Activated B cell treated with CpG ODN at 0.5 μM for 24 hours (primary cell): ENCODE measurements at regions of chr15 and their contacts with region 1.

Region 1: GRCh38 chr15:44397869-44398268 is 29.6 kb upstream of the CTDSPL2 start:
- DNase-seq: no peak
- ATAC-seq: no peak
- H3K4me3 Mint-ChIP-seq: no peak overlapping the region
- H3K27ac Mint-ChIP-seq: no peak overlapping the region
- H3K4me1 Mint-ChIP-seq: peaks cover 2% of the 10 kb centered on the region
- H3K27me3 Mint-ChIP-seq: no peaks in the 10 kb centered on the region
- CTCF ChIP-seq: no peak

Region 2: DNA sequence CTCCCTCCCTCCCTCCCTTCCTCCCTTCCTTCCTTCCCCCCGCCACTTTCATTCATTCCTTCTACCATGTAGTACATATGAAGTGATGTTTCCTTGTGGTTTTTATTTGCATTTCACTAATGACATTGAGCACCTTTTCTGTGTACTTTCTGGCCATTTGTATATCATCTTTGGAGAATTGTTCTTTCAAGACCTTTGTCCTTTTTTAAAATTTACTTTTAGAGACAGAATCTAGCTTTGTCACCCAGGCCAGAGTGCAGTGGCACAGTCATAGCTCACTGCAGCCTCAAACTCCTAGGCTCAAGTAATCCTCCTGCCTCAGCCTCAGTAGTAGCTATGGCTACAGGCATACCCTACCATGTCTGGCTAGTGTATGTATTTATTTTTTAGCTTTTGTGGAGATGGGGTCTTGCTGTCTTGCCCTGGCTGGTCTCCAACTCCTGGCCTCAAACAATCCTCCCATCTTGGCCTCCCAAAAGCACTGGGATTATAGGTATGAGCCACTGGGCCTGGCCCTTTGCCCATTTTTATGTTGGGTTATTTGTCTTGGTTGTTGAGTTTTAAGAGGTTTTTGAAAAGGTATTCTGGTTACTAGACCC is 12.4 kb before region 1 on chr15:
- CTCF ChIA-PET with region 1: no interaction called
- POLR2A ChIA-PET with region 1: interaction called, 10 read pairs
- intact Hi-C with region 1: no loop called
- DNase-seq: no peak
- ATAC-seq: no peak
- H3K4me3 Mint-ChIP-seq: no peak overlapping the region
- H3K27ac Mint-ChIP-seq: no peak overlapping the region
- H3K4me1 Mint-ChIP-seq: peaks cover 15% of the 10 kb centered on the region
- H3K27me3 Mint-ChIP-seq: no peaks in the 10 kb centered on the region
- CTCF ChIP-seq: no peak